ENCODE measurements at regions of chr20 and their contacts with region 1.

Region 1: DNA sequence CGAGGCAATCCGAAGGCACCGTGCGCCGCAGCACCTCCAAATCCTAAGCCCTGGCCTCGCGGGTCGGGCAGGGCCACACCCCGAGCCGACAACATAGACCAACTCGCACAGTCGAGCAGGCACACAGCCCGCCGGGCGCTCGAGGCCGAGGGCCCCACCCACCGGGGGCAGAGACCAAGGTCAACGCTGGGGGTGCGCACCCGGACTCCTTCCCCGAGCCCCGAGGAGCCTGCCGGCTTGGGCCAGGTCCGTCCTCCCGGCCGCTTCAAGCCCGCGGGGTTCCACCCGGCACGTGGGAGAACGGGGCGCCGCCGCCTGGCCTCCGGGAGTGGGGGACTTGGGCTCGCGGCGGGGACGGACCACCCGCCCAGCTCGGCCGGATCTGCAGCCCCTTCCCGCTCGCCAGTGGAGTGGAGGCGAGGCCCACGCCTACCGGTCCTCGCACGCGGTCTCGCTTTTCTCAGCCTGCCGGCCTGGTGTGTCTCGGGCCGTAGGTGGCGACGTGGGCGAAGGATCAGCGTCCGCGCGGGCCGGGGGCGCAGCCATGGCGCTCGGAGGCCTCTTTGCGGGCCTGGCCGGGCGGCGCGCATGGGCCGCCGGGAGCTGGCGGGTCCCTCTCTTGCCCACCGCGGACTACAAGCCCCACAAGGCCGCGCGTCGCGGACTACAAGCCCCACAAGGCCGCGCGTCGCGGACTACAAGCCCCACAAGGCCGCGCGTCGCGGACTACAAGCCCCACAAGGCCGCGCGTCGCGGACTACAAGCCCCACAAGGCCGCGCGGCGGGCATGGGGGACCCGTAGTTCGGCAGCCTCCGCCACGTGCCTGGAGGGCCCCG is at the start of gene UCKL1:
- DNase-seq: peak; percentile 88
- H3K4me3 Mint-ChIP-seq: peak within 1 kb of the TSS; percentile 84
- H3K27ac Mint-ChIP-seq: peak within 1 kb of the TSS; percentile 93
- H3K4me1 Mint-ChIP-seq: peaks cover 19% of the 10 kb centered on the region
- H3K27me3 Mint-ChIP-seq: no peaks in the 10 kb centered on the region
- total RNA-seq, gene UCKL1: 48.7 and 49.3 TPM in 2 replicates

Region 2: GRCh38 chr20:63657937-63658748 is 297.9 kb before region 1 on chr20 and contains the start of gene RTEL1:
- intact Hi-C with region 1: loop called (anchors 1 kb)
- DNase-seq: peak; percentile 87
- H3K4me3 Mint-ChIP-seq: peak within 1 kb of the TSS; percentile 94
- H3K27ac Mint-ChIP-seq: peak within 1 kb of the TSS; percentile 95
- H3K4me1 Mint-ChIP-seq: peaks cover 41% of the 10 kb centered on the region
- H3K27me3 Mint-ChIP-seq: peaks cover 7% of the 10 kb centered on the region
- total RNA-seq, gene RTEL1: 54.4 and 55.5 TPM in 2 replicates

Region 3: DNA sequence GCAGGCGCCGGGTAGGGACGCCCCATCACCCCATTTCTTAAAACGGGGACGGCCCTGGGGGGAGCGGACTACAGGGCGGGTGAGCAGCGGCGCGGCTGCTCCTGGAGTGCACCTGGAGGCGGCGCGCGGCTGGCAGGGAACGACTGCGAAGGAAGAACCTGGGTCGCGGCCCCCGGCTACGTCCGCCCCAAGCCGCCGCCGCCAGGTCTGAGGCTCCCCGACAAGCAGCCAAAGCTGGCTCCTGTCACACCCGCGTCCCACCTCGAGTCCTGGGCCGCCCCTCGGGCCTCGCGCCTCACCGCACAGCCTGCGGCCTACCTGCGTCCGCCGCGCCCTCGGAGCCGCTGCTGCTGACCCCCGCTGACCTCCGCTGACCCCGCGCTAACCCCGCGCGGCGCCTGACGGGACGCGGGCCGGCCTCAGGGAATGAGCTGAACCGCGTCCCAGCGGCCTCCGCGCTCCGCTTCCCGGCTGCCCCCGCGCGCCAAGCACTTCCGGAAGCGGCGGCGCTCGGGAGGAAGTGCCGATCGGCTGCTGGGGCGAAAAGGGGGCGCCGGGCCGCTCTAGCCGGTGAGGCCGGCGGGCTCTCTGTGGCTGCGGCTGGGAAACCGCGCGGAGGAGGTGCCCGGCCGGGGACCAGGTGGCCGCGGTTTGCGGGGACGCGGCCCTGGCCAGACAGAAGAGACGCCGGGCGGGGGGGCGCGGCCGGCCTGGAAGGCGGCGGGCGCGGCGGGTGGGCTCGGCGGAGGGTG is 248.3 kb before region 1 on chr20 and contains the starts of genes ARFRP1 and ZGPAT:
- intact Hi-C with region 1: loop called (anchors 1 kb)
- DNase-seq: peak; percentile 88
- H3K4me3 Mint-ChIP-seq: peak within 1 kb of the TSS; percentile 94
- H3K27ac Mint-ChIP-seq: peak within 1 kb of the TSS; percentile 86
- H3K4me1 Mint-ChIP-seq: peaks cover 31% of the 10 kb centered on the region
- H3K27me3 Mint-ChIP-seq: no peaks in the 10 kb centered on the region
- total RNA-seq, gene ARFRP1: 71.8 and 73.5 TPM in 2 replicates
- total RNA-seq, gene ZGPAT: 34.5 and 36.7 TPM in 2 replicates

Region 4: GRCh38 chr20:63894358-63895201 is 61.5 kb before region 1 on chr20 and contains the start of gene DNAJC5:
- intact Hi-C with region 1: loop called (anchors 1 kb)
- DNase-seq: peak; percentile 98
- H3K4me3 Mint-ChIP-seq: peak within 1 kb of the TSS; percentile 89
- H3K27ac Mint-ChIP-seq: peak within 1 kb of the TSS; percentile 96
- H3K4me1 Mint-ChIP-seq: peaks cover 42% of the 10 kb centered on the region
- H3K27me3 Mint-ChIP-seq: no peaks in the 10 kb centered on the region
- total RNA-seq, gene DNAJC5: 47.5 and 48.2 TPM in 2 replicates

Region 5: GRCh38 chr20:63911176-63911575 is 44.9 kb before region 1 on chr20:
- intact Hi-C with region 1: loop called (anchors 1 kb)
- DNase-seq: no peak
- H3K4me3 Mint-ChIP-seq: no peak overlapping the region
- H3K27ac Mint-ChIP-seq: peak overlapping the region; percentile 77
- H3K4me1 Mint-ChIP-seq: peaks cover 29% of the 10 kb centered on the region
- H3K27me3 Mint-ChIP-seq: no peaks in the 10 kb centered on the region

Region 6: DNA sequence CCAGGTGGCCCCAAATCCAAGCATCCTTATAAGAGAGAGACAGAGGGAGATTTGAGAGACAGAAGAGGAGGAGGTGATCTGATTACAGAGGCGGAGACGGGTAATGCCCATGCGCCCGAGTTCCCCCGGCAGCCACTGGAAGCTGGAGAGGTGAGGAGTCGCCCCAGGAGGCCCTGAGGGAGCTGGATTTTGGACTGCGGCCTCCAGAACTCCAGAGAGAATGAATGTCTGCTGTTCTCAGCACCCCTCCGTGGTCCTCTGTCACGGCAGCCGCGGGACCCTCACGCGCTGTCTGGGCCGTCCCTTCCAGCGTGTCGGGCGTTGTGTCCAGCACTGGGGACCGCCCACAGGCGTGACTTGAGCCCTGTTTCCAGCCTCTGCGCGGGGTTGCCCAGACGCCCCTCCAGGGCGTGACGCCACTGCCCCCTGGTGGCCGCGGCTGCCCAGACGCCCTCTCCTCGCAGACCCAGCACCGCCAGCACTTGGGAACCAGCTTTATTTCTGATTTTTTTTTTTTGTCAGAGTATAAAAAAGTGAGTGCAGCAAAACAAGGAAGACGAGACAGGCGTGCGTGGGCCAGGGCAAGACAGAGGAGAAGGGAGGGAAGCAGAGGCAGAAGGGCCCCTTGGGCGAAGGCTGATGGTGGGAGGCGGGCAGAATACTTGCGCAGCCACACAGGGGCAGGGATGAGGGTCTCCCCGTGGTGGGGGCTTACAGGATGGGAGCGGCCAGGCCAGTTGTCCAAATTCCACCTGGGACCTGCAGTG is 17.8 kb after region 1 on chr20:
- intact Hi-C with region 1: loop called (anchors 1 kb)
- DNase-seq: peak; percentile 70
- H3K4me3 Mint-ChIP-seq: no peak overlapping the region
- H3K27ac Mint-ChIP-seq: peak overlapping the region; percentile 71
- H3K4me1 Mint-ChIP-seq: peaks cover 46% of the 10 kb centered on the region
- H3K27me3 Mint-ChIP-seq: peaks cover 2% of the 10 kb centered on the region

Region 7: GRCh38 chr20:63980806-63981728 is 25.0 kb after region 1 on chr20 and contains the start of gene PRPF6:
- intact Hi-C with region 1: loop called (anchors 1 kb)
- DNase-seq: peak; percentile 94
- H3K4me3 Mint-ChIP-seq: peak within 1 kb of the TSS; percentile 98
- H3K27ac Mint-ChIP-seq: peak within 1 kb of the TSS; percentile 99
- H3K4me1 Mint-ChIP-seq: peaks cover 64% of the 10 kb centered on the region
- H3K27me3 Mint-ChIP-seq: no peaks in the 10 kb centered on the region
- total RNA-seq, gene PRPF6: 82.3 and 83.6 TPM in 2 replicates